RWPE1 (cell line): ENCODE measurements at regions of chr1 and their contacts with region 1.

Region 1: DNA sequence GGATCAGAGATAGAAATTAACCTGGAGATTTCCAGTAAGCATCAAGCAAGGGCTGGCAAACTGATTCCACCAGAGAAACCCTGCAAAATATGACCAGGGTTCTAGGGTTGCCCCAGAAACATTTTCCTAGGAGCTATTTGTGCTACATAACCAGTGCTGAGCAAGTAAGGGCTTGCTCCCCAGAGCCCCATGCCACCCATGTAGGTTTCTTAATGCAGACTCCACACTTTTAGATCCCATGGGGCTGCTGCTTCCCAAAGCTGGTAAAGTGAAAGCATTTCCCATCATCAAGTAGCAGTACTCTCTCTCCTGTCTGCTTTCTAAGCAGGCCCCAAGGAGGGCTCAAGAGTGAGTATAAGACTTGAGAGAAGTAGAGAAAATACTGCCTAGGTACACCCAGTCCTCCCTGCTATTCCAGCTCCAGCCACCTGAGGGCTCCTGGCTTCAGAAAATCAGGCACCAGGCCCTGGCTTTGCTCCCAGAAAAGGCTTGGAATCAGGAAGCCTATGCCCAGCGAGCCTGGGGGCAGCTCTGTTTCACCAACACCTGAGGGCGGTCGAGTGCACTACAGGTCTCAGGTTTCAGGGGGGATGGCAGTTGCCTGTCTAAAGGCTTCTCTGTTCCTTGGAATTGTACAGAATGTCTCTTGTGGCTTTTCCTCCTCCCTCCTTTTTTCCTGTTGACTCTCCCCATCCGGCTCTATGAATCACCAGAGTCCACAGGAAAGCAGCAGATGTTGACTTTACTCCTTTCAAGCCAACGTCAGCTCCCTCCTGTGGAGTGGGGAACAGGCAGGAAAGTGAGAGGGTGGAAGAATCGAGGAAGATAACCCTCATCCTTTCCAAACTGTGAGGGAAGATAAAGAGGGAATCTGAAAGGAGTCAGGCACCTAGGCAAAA is 6.2 kb upstream of the ANKRD35 start:
- DNase-seq: peak; percentile 98
- H3K27ac ChIP-seq: peak overlapping the region; percentile 99
- CTCF ChIP-seq: peak; percentile 99

Region 2: GRCh38 chr1:145845514-145846161 is 46.2 kb before region 1 on chr1 and contains the start of gene NUDT17:
- CTCF ChIA-PET with region 1: interaction called, 19 read pairs
- POLR2A ChIA-PET with region 1: no interaction called
- DNase-seq: peak; percentile 77
- H3K27ac ChIP-seq: peak within 1 kb of the TSS; percentile 66
- CTCF ChIP-seq: peak; percentile 89

Region 3: DNA sequence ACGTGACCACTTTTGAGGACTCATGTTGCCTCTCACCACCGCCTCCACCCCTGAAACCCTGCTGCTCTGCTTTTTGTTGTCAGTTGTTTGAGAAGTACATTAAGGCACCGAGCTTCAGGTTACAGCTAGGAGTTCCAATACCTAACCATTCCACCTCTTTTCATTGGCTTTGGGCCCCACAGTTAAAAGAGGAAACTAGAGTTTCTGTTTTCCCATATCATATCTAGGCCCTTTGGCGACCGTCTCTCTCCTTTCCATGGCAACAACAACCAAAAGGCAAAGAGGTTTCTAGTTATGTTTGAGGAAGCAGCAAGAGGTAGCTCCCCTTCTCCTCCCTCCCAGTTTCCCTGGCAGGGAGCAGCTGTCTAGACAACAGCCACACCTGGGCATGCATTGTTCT is 12.1 kb before region 1 on chr1:
- CTCF ChIA-PET with region 1: interaction called, 12 read pairs
- POLR2A ChIA-PET with region 1: no interaction called
- DNase-seq: no peak
- H3K27ac ChIP-seq: no peak overlapping the region
- CTCF ChIP-seq: no peak

Region 4: DNA sequence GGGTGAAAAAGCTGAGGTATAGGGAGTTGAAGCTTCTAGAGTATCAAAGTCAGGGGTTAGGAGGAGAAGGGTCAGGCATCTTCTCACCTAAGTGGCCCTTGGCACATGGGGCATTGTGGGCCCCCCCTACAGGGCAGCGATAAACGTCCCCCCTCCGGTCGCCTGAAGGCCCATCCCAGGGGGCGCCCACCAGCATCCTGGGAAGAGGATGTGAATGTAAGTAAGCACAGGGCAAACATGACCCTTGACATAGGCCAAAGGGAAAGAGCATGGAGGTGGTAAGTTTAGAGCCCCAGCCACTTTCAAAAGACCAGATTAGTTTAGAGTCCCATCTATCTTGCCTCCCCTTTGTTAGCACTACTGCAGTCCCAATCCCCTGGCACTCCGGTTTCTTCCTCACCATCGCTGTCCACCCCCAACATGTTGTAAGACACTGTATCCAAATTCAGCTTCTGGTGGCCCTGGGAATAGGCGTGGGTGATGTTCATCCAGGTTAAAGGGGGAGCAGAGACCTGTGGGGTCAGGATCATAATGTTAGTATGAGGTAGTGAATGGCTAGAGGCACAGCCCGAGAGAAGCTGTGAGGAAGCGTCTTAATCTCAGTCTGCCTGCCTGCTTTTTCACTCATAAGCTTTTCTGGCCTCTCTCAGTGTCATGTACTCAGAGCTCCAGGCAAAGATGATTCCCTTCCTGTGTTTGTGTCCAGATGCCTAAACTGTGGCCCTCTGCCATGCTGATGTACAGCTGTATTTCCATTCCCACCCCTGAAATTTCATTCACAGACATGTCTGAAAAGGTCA is 15.3 kb after region 1 on chr1:
- CTCF ChIA-PET with region 1: interaction called, 27 read pairs
- POLR2A ChIA-PET with region 1: no interaction called
- DNase-seq: no peak
- H3K27ac ChIP-seq: peak overlapping the region; percentile 51
- CTCF ChIP-seq: no peak

Region 5: DNA sequence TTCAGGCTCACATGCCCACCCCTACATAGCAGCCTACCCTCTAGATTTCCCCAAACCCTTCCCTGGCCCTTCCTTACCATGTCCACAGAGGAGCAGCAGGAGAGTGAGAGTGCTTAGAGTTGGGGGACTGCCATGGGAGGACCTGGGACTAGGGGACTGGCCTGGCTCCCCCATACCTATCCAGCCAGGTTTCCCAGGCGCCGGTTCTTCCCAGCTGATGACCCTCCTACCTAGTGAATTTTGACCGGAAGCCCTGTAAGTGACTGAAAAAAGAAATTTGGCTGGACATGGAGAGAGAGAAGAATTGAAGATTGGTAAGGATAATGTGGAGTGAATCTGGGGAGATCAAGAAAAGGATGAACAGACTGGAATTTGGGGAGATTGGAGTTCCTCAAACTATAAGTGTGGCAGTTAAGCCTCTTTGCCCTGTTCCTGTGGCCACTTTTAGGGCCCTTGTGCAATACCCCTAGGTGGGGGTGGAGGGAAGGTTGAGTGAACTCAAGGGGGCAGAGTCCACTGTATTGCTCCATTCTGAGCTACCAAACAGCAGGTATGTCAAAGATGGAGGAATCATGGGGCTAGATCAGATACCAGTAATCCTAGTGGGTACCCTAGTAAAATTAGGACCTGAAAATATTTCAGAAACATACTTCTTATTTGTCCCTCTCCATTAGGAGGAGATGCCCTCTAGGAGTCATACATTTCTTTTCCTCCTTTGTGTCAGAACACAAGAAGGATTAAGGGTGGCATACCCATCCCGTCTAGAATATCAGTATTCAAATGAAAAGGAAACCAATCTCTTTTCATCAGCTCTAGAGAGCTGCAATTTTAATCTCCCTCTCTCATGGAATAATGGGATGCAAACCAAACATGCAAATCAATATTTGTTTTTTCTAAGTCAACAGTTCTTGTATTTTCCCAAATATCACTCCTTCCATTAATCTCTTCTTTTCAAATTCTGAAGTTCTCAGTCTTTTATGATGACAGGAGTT is 128.5 kb after region 1 on chr1:
- CTCF ChIA-PET with region 1: no interaction called
- POLR2A ChIA-PET with region 1: no interaction called
- DNase-seq: no peak
- H3K27ac ChIP-seq: no peak overlapping the region
- CTCF ChIP-seq: no peak